ENCODE measurements at regions of chr15 and their contacts with region 1.

Region 1: DNA sequence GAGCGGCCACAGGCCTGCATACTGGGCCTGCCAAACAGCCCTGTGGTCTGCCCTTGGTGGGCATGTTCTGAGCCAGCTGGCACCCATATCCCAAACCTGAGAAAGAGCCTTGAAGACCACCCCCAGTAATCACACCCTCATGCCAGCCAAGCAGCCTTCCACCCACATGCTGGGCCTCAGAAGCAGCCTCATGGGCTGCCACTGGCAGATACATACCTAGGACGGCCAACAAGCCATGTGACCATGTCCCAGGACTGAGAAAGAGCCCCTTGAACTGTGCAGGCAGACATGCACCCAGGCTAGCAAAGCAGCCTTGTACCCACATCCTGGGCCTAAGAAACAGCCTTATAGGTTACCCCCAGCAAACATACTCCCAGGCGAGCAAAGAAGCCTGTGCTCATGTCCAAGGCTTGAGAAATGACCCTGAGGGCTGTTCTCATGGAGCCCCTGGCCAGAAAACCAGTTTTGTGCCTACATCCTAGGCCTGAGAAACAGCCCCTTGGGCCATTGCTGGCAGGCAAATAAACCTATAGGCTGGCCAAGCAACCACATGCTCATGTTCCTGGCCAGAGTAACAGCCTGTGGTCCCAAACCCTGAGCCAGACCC is 24.9 kb downstream of the TUBGCP5 start:
- DNase-seq: no peak
- ATAC-seq: peak in 1 of 2 donors; percentile 19
- H3K4me3 ChIP-seq: no peak overlapping the region
- H3K27ac ChIP-seq: no peak overlapping the region
- H3K4me1 ChIP-seq: no peaks in the 10 kb centered on the region
- H3K27me3 ChIP-seq: no peaks in the 10 kb centered on the region

Region 2: DNA sequence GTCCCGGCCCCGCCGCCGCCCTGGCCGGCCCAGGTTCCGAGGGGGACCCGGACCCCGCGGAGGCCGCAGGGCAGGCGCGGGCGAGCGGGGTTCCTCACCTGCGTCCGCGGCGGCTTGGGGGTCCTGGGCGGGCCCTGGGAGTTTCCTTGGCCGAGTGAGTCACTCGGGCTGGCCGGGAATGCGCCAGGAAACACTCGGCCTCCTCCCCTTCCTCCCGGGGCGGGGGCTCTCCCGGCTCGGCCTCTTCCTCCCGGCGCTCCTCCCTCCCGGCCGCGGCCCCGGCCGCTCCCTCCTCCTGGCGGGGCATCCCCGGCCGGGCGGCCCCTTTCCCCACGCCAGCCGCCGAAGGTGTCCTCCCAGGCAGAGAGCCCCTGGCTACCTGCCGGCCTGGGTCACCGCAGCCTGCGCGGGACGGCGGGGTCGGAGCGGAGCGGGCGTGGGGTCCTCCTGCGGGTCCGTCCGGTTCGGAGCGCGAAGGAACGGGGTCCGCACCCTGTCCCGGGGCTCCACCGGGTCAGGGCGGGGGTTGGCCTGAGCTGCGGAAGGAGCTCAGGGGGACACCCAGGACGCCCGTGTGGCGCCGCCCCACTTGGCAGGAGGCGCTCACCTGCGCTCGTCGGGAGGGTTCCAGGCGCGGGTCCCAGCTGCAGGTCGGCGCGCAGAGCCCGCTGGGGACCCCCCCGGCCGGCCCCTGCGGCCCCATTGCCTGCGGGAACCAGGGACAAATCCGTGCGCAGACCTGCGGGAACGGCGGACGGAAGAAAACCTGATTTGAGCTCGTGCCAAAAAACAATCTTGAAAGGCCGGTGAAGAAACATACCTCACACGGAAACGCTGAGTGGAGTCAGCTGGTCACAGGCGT is 34.1 kb before region 1 on chr15 and contains the start of gene CYFIP1:
- intact Hi-C with region 1: loop called in 1 of 4 experiments (anchors 5 kb)
- DNase-seq: peak; percentile 93 to 96 (median 95)
- ATAC-seq: peak; percentile 98
- H3K4me3 ChIP-seq: peak within 1 kb of the TSS; percentile 98
- H3K27ac ChIP-seq: peak within 1 kb of the TSS; percentile 77
- H3K4me1 ChIP-seq: no peaks in the 10 kb centered on the region
- H3K27me3 ChIP-seq: no peaks in the 10 kb centered on the region
- total RNA-seq, gene CYFIP1: 30.3 to 42.5 (median 36.3) TPM

Region 3: GRCh38 chr15:23073890-23074646 is 59.6 kb after region 1 on chr15:
- intact Hi-C with region 1: no loop called
- DNase-seq: peak in 1 of 3 donors; percentile 42
- ATAC-seq: peak in 1 of 2 donors; percentile 41
- H3K4me3 ChIP-seq: no peak overlapping the region
- H3K27ac ChIP-seq: no peak overlapping the region
- H3K4me1 ChIP-seq: no peaks in the 10 kb centered on the region
- H3K27me3 ChIP-seq: no peaks in the 10 kb centered on the region

Region 4: DNA sequence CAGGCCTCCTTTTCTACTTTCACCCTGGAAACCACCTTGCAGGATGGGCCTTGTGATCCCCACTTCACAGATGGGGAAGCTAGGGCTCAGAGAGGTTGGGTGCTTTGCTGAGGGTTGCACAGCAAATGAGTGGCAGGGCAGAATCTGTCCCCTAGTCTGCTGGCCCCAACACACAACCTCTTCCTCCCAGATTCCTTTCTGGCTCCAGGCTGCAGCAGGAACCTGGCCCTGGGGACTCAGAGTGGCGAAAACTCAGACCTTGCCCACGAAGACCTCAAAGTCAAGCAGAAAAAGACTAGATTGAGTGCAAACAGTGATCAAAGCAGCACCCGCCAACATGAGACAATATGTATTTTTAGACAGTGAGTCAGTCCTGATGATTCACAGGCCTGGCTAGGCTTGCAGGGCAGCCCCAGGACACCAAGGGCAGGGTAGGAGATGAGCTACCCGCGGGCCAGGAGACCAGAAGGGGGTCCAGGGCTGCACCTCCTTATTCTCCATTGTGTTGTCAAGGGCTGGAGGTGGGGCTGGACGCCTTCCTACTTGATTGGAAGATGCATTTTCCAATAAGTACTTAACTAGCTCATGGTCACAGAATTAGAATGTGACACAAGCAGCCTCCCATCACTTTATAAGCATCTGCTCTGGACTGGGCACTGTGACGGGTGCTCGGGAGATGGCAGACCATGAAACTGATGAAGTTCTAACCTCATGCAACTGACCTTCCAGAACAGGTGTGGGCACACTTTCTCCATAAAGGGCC is 408.6 kb after region 1 on chr15:
- intact Hi-C with region 1: no loop called
- DNase-seq: no peak
- ATAC-seq: peak; percentile 88 to 94
- H3K4me3 ChIP-seq: no peak overlapping the region
- H3K27ac ChIP-seq: peak overlapping the region; percentile 73
- H3K4me1 ChIP-seq: peaks cover 3% of the 10 kb centered on the region
- H3K27me3 ChIP-seq: no peaks in the 10 kb centered on the region

Measured in right cardiac atrium (tissue), 5 donors.